GM10248 (cell line): ENCODE measurements at regions of chr3 and their contacts with region 1.

Region 1: DNA sequence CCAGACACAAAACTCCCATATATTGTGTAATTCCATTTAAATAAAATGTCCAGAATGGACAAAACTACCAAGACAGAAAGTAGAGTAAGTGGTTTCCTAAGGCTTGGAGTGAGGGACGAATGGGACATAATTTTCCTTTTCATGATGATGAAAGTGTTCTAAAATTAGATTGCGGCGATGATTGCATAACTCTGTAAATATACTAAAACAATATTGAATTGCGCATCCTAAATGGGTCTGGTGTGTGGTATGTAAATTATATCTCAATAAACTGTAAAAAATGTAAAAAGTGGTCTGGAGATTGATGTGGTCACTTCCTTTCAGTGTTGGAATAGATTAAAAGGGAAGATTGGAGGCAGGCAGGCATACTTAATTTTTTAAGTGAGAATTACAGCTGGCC is 105.9 kb upstream of the KCNAB1 start:
- DNase-seq: no peak
- CTCF ChIP-seq: no peak

Region 2: GRCh38 chr3:155352900-155353490 is 661.5 kb before region 1 on chr3:
- CTCF ChIA-PET with region 1: no interaction called
- POLR2A ChIA-PET with region 1: no interaction called
- DNase-seq: peak; percentile 10
- CTCF ChIP-seq: peak; percentile 26

Region 3: GRCh38 chr3:155995525-155996351 is 18.8 kb before region 1 on chr3:
- CTCF ChIA-PET with region 1: interaction called, 10 read pairs
- POLR2A ChIA-PET with region 1: no interaction called
- DNase-seq: peak; percentile 30
- CTCF ChIP-seq: peak; percentile 27

Region 4: GRCh38 chr3:156024904-156025533 is 10.5 kb after region 1 on chr3:
- CTCF ChIA-PET with region 1: interaction called, 11 read pairs
- POLR2A ChIA-PET with region 1: no interaction called
- DNase-seq: no peak
- CTCF ChIP-seq: no peak

Region 5: GRCh38 chr3:156106721-156107373 is 92.4 kb after region 1 on chr3:
- CTCF ChIA-PET with region 1: no interaction called
- POLR2A ChIA-PET with region 1: no interaction called
- DNase-seq: no peak
- CTCF ChIP-seq: no peak